Activated CD4-positive, alpha-beta T cell treated with anti-CD3 and anti-CD28 coated beads, Interleukin-2, amount 10 ng/mL, durations not matched to agents 7 days and 5 days (primary cell): ENCODE measurements at regions of chr5 and their contacts with region 1.

Region 1: GRCh38 chr5:157253547-157253946 is 12.4 kb upstream of the CYFIP2 start:
- DNase-seq: no peak
- H3K4me3 Mint-ChIP-seq: peak overlapping the region; percentile 50
- H3K27ac Mint-ChIP-seq: peak overlapping the region; percentile 94
- H3K4me1 Mint-ChIP-seq: peaks cover 95% of the 10 kb centered on the region
- H3K27me3 Mint-ChIP-seq: no peaks in the 10 kb centered on the region

Region 2: GRCh38 chr5:156971415-156971814 is 282.1 kb before region 1 on chr5:
- CTCF ChIA-PET with region 1: no interaction called
- POLR2A ChIA-PET with region 1: no interaction called
- DNase-seq: no peak
- H3K4me3 Mint-ChIP-seq: no peak overlapping the region
- H3K27ac Mint-ChIP-seq: no peak overlapping the region
- H3K4me1 Mint-ChIP-seq: no peaks in the 10 kb centered on the region
- H3K27me3 Mint-ChIP-seq: no peaks in the 10 kb centered on the region

Region 3: DNA sequence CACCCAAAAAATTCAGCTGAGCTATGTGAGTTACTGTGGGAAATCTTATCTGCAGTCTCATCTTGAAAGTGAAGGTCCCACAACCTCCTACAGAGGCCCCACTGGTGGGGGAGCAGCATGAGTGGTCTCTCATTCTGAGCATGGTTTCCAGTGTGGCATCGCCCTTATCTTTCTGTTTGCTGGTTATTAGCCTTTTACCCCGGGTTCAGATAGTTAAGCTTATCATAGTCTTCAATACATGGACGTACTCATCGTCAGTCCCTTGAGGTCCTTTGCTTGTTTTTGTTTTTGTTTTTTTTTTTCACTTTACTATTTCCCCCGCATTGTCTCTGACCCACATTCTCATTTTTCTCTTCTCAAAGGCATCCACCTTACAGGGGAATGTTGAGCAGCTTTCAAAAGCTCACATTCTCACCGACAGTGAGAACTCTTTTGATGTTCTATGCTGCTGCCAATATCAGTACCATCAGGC is 137.0 kb before region 1 on chr5:
- CTCF ChIA-PET with region 1: no interaction called
- POLR2A ChIA-PET with region 1: no interaction called
- DNase-seq: no peak
- H3K4me3 Mint-ChIP-seq: no peak overlapping the region
- H3K27ac Mint-ChIP-seq: peak overlapping the region; percentile 7
- H3K4me1 Mint-ChIP-seq: peaks cover 41% of the 10 kb centered on the region
- H3K27me3 Mint-ChIP-seq: no peaks in the 10 kb centered on the region

Region 4: DNA sequence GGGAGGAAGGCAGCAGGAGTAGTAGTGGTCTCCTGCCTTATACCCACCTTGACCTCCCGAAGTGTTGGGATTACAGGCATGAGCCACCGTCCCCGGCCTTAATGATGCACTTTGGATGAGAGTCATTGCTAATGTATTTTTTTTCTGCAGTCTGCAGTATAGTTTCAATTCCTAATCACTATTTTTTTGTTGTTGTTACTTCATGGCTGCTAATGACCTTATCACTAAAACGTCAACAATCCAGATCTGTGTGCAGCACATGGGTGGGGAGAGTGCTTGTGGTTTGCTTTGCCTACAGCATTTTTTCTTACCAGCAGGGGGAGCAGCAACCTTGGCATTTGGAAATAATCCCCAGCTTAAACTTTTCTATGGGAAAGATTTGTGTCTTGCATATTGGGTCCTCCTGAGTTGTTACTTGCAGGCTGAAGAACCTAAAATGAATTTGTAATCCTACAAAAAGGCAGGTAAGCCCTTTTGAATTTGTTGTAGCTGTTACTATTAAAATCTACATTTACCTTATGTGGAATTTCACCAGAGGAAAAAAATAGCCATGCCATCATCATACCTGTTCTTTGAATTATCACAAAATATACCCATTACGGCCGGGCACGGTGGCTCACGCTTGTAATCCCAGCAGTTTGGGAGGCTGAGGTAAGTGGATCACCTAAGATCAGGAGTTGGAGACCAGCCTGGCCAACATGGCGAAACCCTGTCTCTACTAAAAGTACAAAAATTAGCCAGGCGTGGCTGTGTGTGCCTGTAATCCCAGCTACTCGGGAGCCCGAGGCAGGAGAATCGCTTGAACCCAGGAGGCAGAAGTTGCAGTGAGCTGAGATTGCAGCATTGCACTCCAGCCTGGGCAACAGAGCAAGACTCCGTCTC is 104.6 kb before region 1 on chr5:
- CTCF ChIA-PET with region 1: interaction called, 13 read pairs
- POLR2A ChIA-PET with region 1: no interaction called
- DNase-seq: peak; percentile 91
- H3K4me3 Mint-ChIP-seq: no peak overlapping the region
- H3K27ac Mint-ChIP-seq: peak overlapping the region; percentile 79
- H3K4me1 Mint-ChIP-seq: peaks cover 47% of the 10 kb centered on the region
- H3K27me3 Mint-ChIP-seq: no peaks in the 10 kb centered on the region

Region 5: GRCh38 chr5:157219491-157220271 is 33.9 kb before region 1 on chr5:
- CTCF ChIA-PET with region 1: interaction called, 21 read pairs
- POLR2A ChIA-PET with region 1: interaction called, 5 read pairs
- DNase-seq: peak; percentile 42
- H3K4me3 Mint-ChIP-seq: peak overlapping the region; percentile 29
- H3K27ac Mint-ChIP-seq: peak overlapping the region; percentile 93
- H3K4me1 Mint-ChIP-seq: peaks cover 93% of the 10 kb centered on the region
- H3K27me3 Mint-ChIP-seq: no peaks in the 10 kb centered on the region

Region 6: GRCh38 chr5:157233515-157233914 is 20.0 kb before region 1 on chr5:
- CTCF ChIA-PET with region 1: interaction called, 16 read pairs
- POLR2A ChIA-PET with region 1: no interaction called
- DNase-seq: no peak
- H3K4me3 Mint-ChIP-seq: no peak overlapping the region
- H3K27ac Mint-ChIP-seq: peak overlapping the region; percentile 54
- H3K4me1 Mint-ChIP-seq: peaks cover 55% of the 10 kb centered on the region
- H3K27me3 Mint-ChIP-seq: no peaks in the 10 kb centered on the region

Region 7: GRCh38 chr5:157265714-157266285 is 12.3 kb after region 1 on chr5 and contains the start of gene CYFIP2:
- CTCF ChIA-PET with region 1: interaction called, 24 read pairs
- POLR2A ChIA-PET with region 1: no interaction called
- DNase-seq: peak; percentile 90
- H3K4me3 Mint-ChIP-seq: peak within 1 kb of the TSS; percentile 97
- H3K27ac Mint-ChIP-seq: peak within 1 kb of the TSS; percentile 98
- H3K4me1 Mint-ChIP-seq: peaks cover 71% of the 10 kb centered on the region
- H3K27me3 Mint-ChIP-seq: no peaks in the 10 kb centered on the region
- total RNA-seq, gene CYFIP2: 452 to 606 TPM

Region 8: DNA sequence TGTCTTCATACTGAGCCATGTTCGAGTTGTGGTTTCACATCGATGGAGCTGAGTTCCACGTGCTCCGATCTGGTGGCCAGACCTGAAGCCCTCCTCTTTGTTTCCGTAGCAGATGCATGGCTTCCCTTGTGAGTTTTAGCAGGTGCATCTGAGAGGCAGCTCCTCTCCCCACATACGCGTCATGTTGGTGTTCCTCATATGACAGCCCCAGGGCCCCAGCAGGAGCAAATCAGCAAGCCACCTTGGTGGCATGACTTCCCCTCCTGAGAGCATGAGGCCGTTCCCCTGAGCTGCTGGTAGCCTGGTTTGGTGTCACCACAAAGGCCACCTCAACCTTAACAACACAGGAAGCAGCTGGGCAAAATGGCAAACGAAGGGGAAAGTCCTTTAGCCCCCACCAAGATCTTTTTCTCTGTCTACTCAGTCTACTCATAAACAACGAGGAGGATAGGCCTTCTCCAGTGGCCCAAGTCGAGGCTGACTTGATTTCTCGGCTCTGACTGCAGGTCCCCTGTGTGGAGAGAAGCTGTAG is 18.3 kb after region 1 on chr5:
- CTCF ChIA-PET with region 1: interaction called, 26 read pairs
- POLR2A ChIA-PET with region 1: interaction called, 5 read pairs
- DNase-seq: peak; percentile 96
- H3K4me3 Mint-ChIP-seq: peak overlapping the region; percentile 97
- H3K27ac Mint-ChIP-seq: peak overlapping the region; percentile 97
- H3K4me1 Mint-ChIP-seq: peaks cover 85% of the 10 kb centered on the region
- H3K27me3 Mint-ChIP-seq: no peaks in the 10 kb centered on the region

Region 9: DNA sequence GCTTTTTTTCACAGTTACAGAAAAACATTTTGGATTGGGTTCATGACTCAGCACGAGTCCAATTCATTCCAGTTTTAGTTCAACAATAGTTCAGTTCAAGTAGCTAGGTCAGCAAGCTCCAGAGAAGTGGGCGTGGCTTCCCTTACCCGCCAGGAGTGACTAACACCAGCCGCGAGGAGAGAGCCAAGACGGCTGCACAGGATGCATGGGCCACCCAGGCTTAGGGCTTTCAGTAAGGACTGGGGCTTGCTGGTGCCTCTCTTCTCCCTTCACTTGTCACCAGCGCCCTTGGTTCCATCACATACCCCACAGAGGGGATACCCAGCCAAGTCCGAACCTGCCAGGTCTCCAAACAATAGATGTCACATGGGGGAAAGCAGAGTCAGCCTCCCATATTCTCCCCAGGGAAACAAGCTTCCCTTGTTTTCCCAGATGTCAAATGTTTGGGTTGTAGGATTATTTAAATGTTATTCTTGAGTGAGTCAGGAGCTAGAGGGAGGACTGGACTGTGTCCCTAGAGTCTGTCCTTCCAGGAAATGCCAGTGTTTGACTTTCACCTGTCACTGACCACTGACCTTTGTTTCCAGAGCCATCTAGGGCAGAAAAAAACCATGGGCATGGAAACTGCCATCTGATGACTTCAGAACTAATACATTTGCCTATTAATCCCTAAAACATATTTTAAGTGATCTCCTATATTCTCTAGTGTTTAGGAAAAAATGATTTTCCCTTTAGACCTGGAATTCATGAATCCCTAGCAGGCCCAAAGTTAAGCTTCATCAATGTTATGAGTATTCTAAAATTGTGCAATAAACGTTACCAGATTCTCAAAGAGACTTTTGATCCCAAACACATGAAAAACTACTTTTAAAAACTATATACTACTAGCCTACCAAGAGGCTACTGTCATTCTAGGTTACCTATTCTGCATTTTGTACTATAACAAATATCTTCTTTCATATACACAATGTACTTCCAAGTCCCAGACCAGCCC is 258.4 kb after region 1 on chr5:
- CTCF ChIA-PET with region 1: no interaction called
- POLR2A ChIA-PET with region 1: no interaction called
- DNase-seq: peak; percentile 18
- H3K4me3 Mint-ChIP-seq: no peak overlapping the region
- H3K27ac Mint-ChIP-seq: peak overlapping the region; percentile 14
- H3K4me1 Mint-ChIP-seq: peaks cover 25% of the 10 kb centered on the region
- H3K27me3 Mint-ChIP-seq: no peaks in the 10 kb centered on the region